ENCODE measurements at regions of chr10 and their contacts with region 1.

Region 1: GRCh38 chr10:122446668-122447423 is 7.6 kb upstream of the ARMS2 start:
- DNase-seq: no peak
- H3K4me3 ChIP-seq: no peak overlapping the region
- H3K27ac ChIP-seq: peak overlapping the region; percentile 31
- H3K4me1 ChIP-seq: peaks cover 47% of the 10 kb centered on the region
- H3K27me3 ChIP-seq: no peaks in the 10 kb centered on the region
- CTCF ChIP-seq: no peak

Region 2: DNA sequence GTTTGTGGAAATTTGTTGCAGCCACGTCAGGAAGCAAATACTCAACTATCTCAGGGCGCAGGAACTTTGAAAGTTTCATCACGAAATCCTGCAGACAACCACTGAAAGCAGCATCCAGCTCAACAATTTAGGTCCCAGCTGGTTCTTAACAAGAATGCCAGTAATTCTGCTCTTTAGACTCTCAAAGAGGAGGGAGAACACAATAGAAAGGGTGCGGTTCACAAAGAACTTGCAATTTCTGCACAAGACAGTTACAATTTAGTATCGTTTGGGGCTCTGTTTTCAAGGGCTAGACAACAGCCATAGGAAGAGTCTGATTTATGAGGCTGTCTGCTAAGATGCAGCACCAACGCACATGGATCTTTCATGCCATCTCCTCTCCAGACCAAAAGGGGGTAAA is 1071.7 kb before region 1 on chr10:
- intact Hi-C with region 1: no loop called
- DNase-seq: no peak
- H3K4me3 ChIP-seq: no peak overlapping the region
- H3K27ac ChIP-seq: no peak overlapping the region
- H3K4me1 ChIP-seq: no peaks in the 10 kb centered on the region
- H3K27me3 ChIP-seq: peaks cover 4% of the 10 kb centered on the region
- CTCF ChIP-seq: no peak

Region 3: DNA sequence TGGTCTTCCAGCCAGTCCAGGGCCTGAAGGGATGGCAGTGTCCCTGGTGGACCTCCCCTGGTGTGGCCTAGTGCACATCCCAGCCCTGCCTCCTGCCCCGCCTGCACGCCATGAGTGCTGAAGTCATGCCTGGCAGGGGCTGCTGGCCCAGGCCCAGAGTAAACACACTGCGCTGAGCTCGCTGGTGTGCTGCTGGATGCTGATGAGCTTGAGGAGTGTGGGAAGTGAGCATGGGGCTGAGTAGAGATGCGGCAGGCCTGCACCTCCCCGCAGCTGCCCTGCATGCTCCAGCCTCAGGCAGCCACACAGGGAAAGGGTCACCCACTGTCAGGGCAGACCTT is 57.7 kb after region 1 on chr10:
- intact Hi-C with region 1: no loop called
- DNase-seq: peak; percentile 92
- H3K4me3 ChIP-seq: no peak overlapping the region
- H3K27ac ChIP-seq: peak overlapping the region; percentile 41
- H3K4me1 ChIP-seq: peaks cover 32% of the 10 kb centered on the region
- H3K27me3 ChIP-seq: no peaks in the 10 kb centered on the region
- CTCF ChIP-seq: no peak

Region 4: DNA sequence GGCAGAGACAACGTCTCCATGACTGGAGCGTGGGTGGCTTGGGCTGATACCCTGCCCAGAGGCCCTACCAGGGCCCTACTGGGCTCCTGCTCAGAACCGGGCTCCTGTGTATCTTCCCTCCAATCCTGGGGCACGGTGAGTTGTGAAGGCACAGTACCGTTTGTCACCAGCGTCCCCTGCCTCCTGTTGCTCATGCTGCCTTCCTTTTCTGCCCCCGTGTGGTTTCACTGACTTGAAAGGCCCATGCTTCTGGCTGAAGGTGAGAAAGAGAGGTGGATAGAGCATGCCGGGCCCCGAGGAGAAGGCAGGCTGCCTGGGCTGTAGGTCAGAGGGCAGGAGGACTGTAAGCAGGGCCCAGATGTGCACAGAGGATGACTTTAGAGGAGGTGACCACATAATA is 104.6 kb after region 1 on chr10:
- intact Hi-C with region 1: loop called (anchors 10 kb)
- DNase-seq: no peak
- H3K4me3 ChIP-seq: no peak overlapping the region
- H3K27ac ChIP-seq: no peak overlapping the region
- H3K4me1 ChIP-seq: peaks cover 5% of the 10 kb centered on the region
- H3K27me3 ChIP-seq: peaks cover 5% of the 10 kb centered on the region
- CTCF ChIP-seq: peak; percentile 54